ENCODE measurements at regions of chr3 and their contacts with region 1.

Region 1: DNA sequence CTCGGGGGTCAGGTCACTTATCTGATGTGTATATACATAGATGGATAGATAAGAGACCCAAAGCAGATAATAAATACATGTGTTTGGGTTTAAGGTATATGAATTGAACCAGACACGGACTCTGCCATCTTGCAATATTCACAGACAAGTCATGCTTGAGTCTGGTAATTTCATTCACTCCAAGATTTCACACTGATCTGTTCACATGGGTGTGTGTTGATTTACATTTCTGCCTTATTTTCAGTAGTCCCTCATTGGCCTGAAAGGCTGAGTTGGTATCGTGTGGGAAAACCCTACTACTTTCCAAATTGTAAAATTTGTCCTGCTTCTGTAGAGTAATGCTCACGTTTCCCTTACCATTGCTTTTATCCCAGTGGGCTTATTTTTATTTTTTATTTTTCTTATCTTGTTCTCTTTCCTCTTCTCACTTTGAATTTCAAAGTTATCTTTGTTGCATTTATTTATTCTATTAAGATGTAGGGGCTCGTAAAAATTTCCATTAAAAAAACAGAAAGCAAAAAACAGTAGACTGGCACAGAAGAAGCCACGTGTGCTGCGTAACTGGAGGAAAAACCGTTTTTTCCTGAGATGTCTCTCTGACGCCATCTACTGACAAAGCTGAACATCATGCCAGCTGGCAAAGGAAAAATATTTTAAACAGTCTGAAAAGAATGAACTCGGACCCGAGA is 10.8 kb upstream of the MFSD1 start:
- DNase-seq: peak; percentile 57

Region 2: DNA sequence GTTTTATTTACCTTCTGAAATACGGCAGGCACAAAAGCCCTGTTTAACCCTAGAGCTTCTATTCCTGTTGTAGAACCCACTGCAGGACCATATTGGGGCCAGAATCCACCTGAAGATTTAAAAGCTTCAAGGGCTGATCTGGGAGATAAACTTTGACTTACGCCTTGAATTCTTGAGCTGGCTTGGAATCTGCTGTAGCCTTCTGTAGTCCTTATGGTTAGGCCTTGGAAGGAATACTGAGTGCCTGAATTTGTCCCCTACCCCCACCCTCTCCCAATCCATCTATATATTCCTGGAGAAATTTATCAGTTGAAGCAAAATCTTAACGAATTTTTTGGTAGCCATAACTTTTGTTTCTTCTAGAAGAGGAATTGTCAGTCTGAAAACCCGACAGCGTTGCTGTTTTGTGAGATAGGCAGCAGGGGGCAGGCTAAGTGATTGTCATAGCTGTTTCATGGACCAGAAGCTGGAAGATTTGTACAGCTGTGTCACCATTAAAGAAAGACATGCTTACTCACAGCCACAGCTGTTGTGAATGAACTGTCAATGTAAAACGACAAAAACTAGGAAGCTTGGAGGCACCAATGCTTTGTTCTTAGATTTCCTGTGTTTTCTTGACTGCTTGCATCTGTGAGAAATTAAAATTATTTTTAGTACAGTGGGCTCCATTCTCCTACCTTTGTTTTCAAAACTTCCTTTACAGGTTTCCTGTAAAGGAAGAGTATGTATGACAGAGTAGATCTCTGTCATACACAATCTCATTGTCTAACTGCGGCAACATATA is 131.4 kb before region 1 on chr3:
- CTCF ChIA-PET with region 1: interaction called, 10 read pairs
- POLR2A ChIA-PET with region 1: no interaction called
- DNase-seq: peak; percentile 59

Region 3: GRCh38 chr3:158727206-158728060 is 63.6 kb before region 1 on chr3:
- CTCF ChIA-PET with region 1: interaction called, 17 read pairs
- POLR2A ChIA-PET with region 1: no interaction called
- DNase-seq: peak; percentile 68